AG04449 (cell line): ENCODE measurements at regions of chr1 and their contacts with region 1.

Region 1: DNA sequence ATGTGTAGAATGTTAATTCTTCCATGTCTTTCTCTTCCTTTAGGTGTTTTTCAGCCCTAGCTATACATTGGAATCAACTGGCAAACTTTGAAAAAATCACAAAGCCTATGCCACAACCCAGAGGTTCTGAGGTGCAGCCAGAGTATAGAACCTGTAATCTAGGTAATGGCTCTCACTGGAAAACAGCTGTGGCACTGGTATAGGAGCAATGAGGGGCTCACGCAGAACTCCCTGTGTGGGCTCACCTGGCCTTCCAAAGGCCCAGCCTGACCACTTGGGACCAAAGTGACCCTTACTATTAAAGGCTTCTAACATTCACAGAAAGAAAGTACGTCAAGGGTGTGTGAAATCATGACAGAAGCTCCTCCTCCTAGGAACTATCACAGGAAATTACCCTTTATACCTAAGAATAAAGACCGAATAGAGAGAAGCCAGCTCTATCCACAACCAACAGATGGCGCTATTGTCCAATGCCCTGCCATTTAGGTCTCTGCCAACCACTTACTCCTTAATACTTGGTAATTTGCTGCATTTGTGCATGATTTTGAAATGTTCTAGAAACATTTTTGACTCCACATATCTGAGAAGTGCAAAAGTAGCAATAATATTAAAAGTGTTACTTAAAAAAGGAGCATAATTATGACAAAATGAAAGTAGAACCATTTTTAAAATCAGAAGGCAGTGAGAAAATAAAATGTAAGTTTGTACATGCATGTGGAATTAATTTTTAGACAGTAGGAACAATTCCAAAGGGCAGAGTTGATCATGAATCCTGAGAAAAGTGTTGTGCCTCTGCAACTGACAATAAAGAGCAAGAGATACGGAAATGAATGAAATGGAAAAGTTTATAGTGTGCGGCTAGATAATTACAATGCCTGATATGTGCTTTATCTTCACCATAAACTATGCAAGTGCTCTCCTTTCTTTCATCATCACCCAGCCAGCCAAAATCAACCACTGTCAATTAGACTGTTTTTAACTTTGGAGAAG is 93.1 kb upstream of the HAO2 start:
- DNase-seq: no peak
- H3K4me3 ChIP-seq: no peak overlapping the region
- CTCF ChIP-seq: peak; percentile 84

Region 2: DNA sequence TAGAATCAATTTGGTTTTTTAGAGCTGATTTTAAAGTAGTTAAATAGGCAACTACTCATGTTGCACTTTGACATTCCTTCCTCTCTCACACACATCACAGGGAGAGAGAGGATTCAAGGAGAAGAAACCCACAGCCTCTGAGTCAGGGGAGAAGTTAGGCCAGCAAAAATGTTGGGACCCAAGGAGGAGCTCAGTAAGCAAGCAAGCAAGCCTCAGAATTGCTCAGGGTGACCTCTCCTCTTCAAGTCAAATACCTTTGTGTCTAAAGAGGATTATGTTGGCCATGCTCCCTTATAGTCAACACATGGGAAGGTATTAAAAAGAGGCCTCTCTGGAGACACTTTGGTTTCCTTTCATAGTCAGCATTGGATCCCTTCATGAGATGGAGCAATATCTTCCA is 54.4 kb before region 1 on chr1:
- CTCF ChIA-PET with region 1: interaction called, 12 read pairs
- POLR2A ChIA-PET with region 1: no interaction called
- DNase-seq: peak; percentile 77
- H3K4me3 ChIP-seq: no peak overlapping the region
- CTCF ChIP-seq: no peak

Region 3: GRCh38 chr1:119260506-119260905 is 14.9 kb before region 1 on chr1:
- CTCF ChIA-PET with region 1: interaction called, 28 read pairs
- POLR2A ChIA-PET with region 1: no interaction called
- DNase-seq: no peak
- H3K4me3 ChIP-seq: no peak overlapping the region
- CTCF ChIP-seq: no peak

Region 4: DNA sequence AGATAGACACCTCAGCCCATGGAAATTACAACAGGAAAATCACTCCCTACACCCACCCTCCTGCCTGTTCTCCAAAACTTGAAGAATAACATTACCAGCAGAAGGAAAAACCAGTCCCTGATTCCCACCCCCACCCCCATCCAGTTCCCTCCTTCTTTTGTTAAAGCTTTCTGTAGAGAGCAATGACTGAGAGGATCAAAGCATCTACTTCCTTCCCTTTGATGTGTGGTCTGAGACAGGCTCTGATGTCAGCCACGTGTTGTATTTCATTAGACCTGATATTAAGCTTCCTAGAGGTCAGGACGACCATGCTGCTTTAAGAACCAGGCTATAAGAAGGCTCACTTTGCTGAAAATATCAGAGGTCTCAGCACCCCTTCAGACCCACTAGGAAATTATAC is 19.3 kb after region 1 on chr1:
- CTCF ChIA-PET with region 1: interaction called, 12 read pairs
- POLR2A ChIA-PET with region 1: no interaction called
- DNase-seq: no peak
- H3K4me3 ChIP-seq: no peak overlapping the region
- CTCF ChIP-seq: no peak

Region 5: GRCh38 chr1:119372490-119373086 is 97.1 kb after region 1 on chr1:
- CTCF ChIA-PET with region 1: interaction called, 99 read pairs
- POLR2A ChIA-PET with region 1: no interaction called
- DNase-seq: no peak
- H3K4me3 ChIP-seq: no peak overlapping the region
- CTCF ChIP-seq: no peak